MCF 10A (cell line): ENCODE measurements at regions of chr6 and their contacts with region 1.

Region 1: DNA sequence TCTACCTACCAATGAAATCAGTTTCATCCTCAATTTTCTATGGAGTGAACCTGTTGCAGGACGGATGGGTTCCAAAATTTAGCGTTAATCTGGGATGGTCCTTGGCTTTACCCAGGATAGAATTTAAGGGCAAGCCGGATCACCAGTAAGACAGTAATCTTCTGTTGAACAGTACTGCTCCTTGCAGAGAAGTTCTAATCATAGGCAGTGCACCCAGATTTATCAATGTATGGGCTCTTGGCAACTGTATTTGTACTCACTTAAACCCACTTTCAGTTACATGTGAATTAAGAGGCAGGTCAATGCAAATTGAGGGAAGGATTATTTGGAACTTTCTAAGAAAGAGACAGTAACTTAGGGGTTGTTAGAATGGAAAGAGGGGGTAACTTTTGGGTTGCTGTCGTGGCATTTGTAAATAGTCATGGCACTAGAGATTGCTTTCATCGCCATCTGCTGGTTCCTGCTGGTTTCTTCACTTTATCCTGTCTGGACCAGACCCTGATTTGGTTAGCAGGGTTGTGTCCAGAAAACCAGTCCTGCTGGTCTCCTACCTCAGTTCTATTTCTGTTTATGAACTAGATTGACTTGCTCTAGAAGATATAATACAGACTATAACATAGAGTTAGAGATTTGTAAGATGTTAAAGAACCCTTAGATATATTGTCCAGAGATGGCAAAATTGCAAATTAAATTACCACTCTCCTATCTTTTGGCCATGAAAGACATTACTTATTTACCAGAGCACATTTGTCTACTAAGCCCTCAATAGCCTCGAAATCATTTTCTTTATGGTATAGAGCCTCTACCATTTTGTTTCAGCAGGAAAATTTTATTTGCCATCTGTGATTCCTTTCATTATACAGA is 646.3 kb downstream of the UTRN start:
- DNase-seq: peak; percentile 59
- H3K4me3 Mint-ChIP-seq: no peak overlapping the region
- H3K27ac Mint-ChIP-seq: no peak overlapping the region
- H3K4me1 Mint-ChIP-seq: no peaks in the 10 kb centered on the region
- H3K27me3 Mint-ChIP-seq: no peaks in the 10 kb centered on the region
- CTCF ChIP-seq: peak; percentile 52

Region 2: DNA sequence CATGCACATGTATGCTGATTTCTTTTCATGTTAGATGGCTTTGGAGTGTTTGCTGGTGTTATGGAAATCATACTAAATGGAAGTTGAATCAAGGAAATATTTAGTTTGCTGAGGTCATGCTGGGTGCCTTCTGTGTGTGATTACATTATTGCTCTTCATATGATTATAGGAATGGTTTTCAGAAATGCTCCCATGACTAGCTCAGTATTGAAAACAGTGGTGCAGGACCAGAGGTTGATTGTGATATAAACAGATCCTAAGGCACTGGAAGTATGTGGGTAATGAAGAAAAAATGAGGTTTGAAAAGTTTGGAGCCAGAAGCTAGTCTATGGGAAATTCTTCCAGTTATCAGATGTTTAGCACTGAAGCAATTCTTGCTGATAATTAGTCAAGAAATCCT is 46.8 kb after region 1 on chr6:
- CTCF ChIA-PET with region 1: no interaction called
- POLR2A ChIA-PET with region 1: no interaction called
- intact Hi-C with region 1: no loop called
- DNase-seq: no peak
- H3K4me3 Mint-ChIP-seq: no peak overlapping the region
- H3K27ac Mint-ChIP-seq: no peak overlapping the region
- H3K4me1 Mint-ChIP-seq: no peaks in the 10 kb centered on the region
- H3K27me3 Mint-ChIP-seq: no peaks in the 10 kb centered on the region
- CTCF ChIP-seq: no peak

Region 3: GRCh38 chr6:145137426-145137825 is 206.0 kb after region 1 on chr6:
- CTCF ChIA-PET with region 1: no interaction called
- POLR2A ChIA-PET with region 1: no interaction called
- intact Hi-C with region 1: loop called (anchors 10 kb)
- DNase-seq: peak; percentile 47
- H3K4me3 Mint-ChIP-seq: no peak overlapping the region
- H3K27ac Mint-ChIP-seq: no peak overlapping the region
- H3K4me1 Mint-ChIP-seq: peaks cover 5% of the 10 kb centered on the region
- H3K27me3 Mint-ChIP-seq: no peaks in the 10 kb centered on the region
- CTCF ChIP-seq: peak; percentile 32